ENCODE measurements at regions of chr1 and their contacts with region 1.

Region 1: DNA sequence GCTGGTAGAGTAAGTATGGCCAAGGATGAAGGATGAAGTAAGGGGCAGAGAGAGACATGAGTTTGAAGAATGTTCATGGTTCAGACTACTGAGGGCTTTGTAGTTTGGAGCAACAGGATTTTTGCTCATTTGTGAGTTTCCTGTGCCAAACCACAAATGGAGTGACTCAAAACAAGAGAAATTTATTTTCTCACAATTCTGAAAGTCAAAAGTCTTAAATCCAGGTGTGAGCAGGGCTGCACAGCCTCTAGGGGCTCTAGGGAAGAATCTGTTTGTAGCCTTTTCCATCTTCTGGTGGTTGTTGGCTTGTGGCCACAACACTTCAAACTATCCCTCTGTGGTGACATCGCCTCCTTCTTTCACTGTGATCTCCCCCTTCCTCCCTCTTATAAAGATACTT is 58.9 kb downstream of the RHOU start:
- DNase-seq: no peak

Region 2: GRCh38 chr1:229487181-229487580 is 693.0 kb after region 1 on chr1:
- intact Hi-C with region 1: loop called in 1 of 2 experiments (anchors 5 kb)
- DNase-seq: no peak

Measured in posterior vena cava (tissue), 2 donors.